Naive thymus-derived CD4-positive, alpha-beta T cell (primary cell): ENCODE measurements at regions of chr3 and their contacts with region 1.

Region 1: DNA sequence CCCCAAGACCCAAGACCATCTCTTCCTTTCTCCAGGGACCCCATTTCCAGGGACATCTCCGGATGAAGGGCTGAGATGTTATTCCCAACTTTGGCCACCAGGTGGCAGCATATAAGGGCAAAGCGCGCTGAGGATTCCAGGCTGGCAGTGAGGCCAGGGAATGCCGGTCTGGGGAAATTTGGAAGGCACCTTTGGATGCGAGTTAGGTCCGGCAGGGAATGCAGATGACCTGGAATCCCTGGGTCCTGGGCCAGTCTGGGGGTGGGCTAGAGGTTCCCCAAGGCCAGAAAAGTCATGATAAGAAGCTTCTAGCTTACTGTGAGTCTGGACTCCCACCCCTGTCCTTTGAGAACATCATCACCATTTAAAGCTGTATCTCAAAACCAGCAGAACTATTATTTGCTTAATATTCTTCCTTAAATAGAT is 1.6 kb upstream of the CHST13 start:
- DNase-seq: peak in 8 of 9 donors; percentile 17 to 52 (median 34)
- ATAC-seq: no peak
- H3K4me3 ChIP-seq: no peak overlapping the region
- H3K4me3 Mint-ChIP-seq: no peak overlapping the region
- H3K27ac ChIP-seq: no peak overlapping the region
- H3K27ac Mint-ChIP-seq: no peak overlapping the region
- H3K4me1 ChIP-seq: no peaks in the 10 kb centered on the region
- H3K4me1 Mint-ChIP-seq: peaks cover 0 to 4% (median 0%) of the 10 kb centered on the region in 7 donors
- H3K27me3 ChIP-seq: no peaks in the 10 kb centered on the region
- H3K27me3 Mint-ChIP-seq: peaks cover 12 to 22% (median 21%) of the 10 kb centered on the region in 5 donors

Region 2: DNA sequence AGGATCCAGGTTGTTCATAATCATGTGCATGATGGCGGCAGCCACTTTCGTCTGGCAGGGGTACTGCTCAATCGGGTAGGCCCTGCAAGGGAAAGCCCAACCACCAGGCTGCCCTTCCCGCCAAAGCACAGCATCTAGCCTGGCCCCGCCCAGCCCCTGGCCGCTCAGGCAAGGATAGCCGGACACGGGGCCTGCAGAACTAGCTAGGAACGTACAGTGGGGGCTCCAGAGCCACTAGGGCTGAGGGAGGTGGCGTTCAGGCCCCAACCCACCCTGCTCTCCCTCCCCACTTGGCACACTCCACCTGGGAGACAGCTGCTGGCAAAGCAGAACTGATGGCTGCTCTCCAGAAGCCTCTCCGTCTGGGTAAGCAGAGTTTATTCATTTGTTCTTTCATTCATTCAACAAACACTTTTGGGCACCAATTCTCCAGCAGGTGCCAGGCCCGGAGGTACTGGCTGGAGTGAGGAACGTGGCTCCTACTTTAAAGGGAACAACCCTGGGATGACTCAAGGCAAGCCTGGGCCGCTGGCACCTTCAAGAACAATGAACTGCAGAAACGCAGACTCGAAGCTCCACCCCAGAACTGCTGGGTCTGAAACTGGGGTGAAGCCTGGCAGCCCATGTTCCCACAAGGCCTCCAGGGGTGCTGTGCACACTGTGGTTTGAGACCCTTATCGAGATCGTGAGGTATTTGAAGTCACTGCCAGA is 12.6 kb before region 1 on chr3:
- CTCF ChIA-PET with region 1: interaction called, 10 read pairs
- POLR2A ChIA-PET with region 1: no interaction called
- intact Hi-C with region 1: no loop called
- DNase-seq: no peak
- ATAC-seq: no peak
- H3K4me3 ChIP-seq: no peak overlapping the region
- H3K4me3 Mint-ChIP-seq: no peak overlapping the region
- H3K27ac ChIP-seq: no peak overlapping the region
- H3K27ac Mint-ChIP-seq: no peak overlapping the region
- H3K4me1 ChIP-seq: no peaks in the 10 kb centered on the region
- H3K4me1 Mint-ChIP-seq: no peaks in the 10 kb centered on the region
- H3K27me3 ChIP-seq: no peaks in the 10 kb centered on the region
- H3K27me3 Mint-ChIP-seq: peaks cover 0 to 4% (median 0%) of the 10 kb centered on the region in 5 donors

Region 3: GRCh38 chr3:126654571-126655383 is 132.4 kb after region 1 on chr3 and contains the start of gene TXNRD3:
- CTCF ChIA-PET with region 1: no interaction called
- POLR2A ChIA-PET with region 1: interaction called, 3 read pairs
- intact Hi-C with region 1: loop called (anchors 5 kb)
- DNase-seq: peak; percentile 52 to 76 (median 71)
- ATAC-seq: peak; percentile 93
- H3K4me3 ChIP-seq: peak within 1 kb of the TSS; percentile 46
- H3K4me3 Mint-ChIP-seq: peak within 1 kb of the TSS; percentile 83 to 93 (median 89)
- H3K27ac ChIP-seq: peak within 1 kb of the TSS; percentile 51
- H3K27ac Mint-ChIP-seq: peak within 1 kb of the TSS in 7 of 9 donors; percentile 18 to 91 (median 51)
- H3K4me1 ChIP-seq: peaks cover 0 to 3% of the 10 kb centered on the region in 2 donors
- H3K4me1 Mint-ChIP-seq: peaks cover 4 to 19% (median 10%) of the 10 kb centered on the region in 7 donors
- H3K27me3 ChIP-seq: peaks cover 0 to 4% of the 10 kb centered on the region in 2 donors
- H3K27me3 Mint-ChIP-seq: peaks cover 0 to 51% (median 4%) of the 10 kb centered on the region in 5 donors
- total RNA-seq, gene TXNRD3: 0.46 to 4.8 (median 3.2) TPM

Region 4: GRCh38 chr3:127455541-127456450 is 933.4 kb after region 1 on chr3:
- CTCF ChIA-PET with region 1: no interaction called
- POLR2A ChIA-PET with region 1: no interaction called
- intact Hi-C with region 1: loop called in 1 of 2 experiments (anchors 1 kb)
- DNase-seq: peak in 8 of 9 donors; percentile 14 to 70 (median 41)
- ATAC-seq: peak; percentile 75
- H3K4me3 ChIP-seq: no peak overlapping the region
- H3K4me3 Mint-ChIP-seq: peak overlapping the region in 9 of 10 donors; percentile 5 to 77 (median 53)
- H3K27ac ChIP-seq: no peak overlapping the region
- H3K27ac Mint-ChIP-seq: no peak overlapping the region
- H3K4me1 ChIP-seq: no peaks in the 10 kb centered on the region
- H3K4me1 Mint-ChIP-seq: peaks cover 4 to 18% (median 14%) of the 10 kb centered on the region in 7 donors
- H3K27me3 ChIP-seq: peaks cover 0 to 8% of the 10 kb centered on the region in 2 donors
- H3K27me3 Mint-ChIP-seq: peaks cover 47 to 72% (median 65%) of the 10 kb centered on the region in 5 donors